ENCODE measurements at regions of chr5 and their contacts with region 1.

Region 1: DNA sequence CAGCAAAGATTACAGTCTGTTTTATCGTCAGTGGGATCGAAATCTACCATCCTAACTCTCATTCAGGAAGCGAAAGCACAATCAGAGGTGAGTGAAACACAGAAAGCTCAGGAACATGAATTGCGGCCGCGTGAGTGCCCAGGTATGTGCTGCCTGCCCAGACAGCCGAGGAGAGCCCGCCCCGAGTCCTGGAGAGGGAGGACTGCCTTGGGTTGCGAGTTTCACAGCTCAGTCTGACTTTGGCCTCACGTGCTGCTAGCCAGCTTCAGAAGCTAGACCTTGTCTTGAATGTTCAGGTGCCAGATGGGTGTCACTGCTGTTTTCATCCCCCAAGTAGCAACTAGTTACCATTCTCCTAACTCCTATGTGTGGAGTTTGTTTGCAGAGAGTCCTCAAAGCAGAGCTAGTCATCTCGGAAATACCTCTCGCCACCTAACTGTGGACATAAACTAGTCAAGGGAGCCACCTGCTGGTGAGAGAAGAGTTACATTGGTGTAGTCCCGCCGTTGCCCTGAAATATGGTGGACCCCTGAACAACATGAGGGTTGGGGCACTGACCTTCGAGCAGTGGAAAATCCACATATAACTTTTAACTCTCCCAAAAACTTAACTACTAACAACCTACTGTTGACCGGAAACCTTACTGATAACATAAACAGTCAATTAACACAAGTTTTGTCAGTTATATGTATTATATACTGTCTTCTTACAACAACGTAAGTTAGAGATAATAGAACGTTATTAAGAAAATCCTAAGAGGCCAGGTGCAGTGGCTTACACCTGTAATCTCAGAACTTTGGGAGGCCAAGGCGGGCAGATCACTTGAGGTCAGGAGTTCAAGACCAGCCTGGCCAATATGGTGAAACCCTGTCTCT is 80.9 kb downstream of the GOLPH3 start:
- DNase-seq: peak; percentile 84
- CTCF ChIP-seq: peak; percentile 79

Region 2: GRCh38 chr5:31581498-31582099 is 511.6 kb before region 1 on chr5:
- CTCF ChIA-PET with region 1: interaction called, 15 read pairs
- POLR2A ChIA-PET with region 1: no interaction called
- DNase-seq: no peak
- CTCF ChIP-seq: peak; percentile 40

Region 3: DNA sequence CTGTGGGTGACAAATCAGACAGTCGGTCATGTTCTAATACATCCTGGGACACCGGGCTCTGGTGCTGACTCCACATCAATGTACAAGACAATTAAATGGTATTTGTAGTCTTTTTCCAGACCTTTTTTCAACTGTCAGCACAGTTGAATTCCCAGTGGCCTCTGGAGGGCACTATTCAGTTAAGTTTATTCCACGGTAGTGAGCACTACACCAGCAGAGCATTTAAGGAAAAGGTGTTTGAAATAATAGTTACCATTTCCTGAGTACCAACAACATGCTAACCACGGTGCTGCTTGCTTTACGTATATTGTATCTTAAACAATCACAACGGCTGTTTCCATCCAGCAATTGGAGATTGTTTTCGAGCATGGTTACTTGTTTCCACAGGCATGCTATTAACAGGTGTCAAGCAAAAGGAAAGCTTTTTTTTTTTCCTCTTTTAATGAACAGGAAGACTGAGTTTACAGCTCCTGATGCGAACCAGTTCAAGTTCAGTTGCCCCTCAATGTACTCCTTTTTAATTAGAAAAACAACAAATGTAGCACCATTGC is 267.6 kb before region 1 on chr5:
- CTCF ChIA-PET with region 1: interaction called, 18 read pairs
- POLR2A ChIA-PET with region 1: no interaction called
- DNase-seq: peak; percentile 30
- CTCF ChIP-seq: peak; percentile 64

Region 4: GRCh38 chr5:32109236-32109635 is 16.1 kb after region 1 on chr5:
- CTCF ChIA-PET with region 1: interaction called, 21 read pairs
- POLR2A ChIA-PET with region 1: no interaction called
- DNase-seq: no peak
- CTCF ChIP-seq: no peak

Measured in GM10248 (cell line).